Left lung (tissue), 14 donors: ENCODE measurements at regions of chr13 and their contacts with region 1.

Region 1: DNA sequence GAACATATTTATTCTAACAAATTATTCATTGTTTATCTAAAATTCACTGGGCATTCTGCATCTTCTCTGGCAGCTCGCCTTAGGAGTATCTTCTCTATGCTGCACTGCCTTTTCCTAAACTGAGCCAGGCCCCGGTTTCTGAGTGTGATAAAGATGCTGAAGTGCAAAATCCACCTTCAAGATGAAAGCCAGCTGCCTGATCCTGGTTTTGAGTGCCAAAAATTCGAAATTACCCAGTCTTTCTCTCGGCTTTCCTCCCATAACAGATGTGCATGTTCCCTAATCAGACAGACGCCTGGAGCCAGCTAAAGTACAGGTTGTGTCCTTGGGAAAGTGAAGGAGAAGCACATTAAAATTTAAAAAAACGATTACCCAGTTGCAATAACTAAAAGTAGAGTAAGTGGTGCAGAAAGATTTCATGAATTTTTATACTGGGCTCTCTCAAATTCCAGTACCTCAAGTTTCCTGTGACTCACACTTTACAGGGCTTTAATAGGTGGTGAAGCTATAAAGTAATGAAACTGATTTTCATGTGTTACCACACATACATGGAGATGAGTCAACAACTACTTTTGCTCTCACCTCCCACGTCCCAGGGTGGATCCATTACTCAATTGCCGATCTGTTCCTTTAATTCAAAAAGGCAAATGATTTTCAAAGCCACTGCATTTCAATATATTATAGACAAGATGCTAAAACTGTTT is 65.0 kb upstream of the GTF2F2 start:
- DNase-seq: no peak
- ATAC-seq: peak; percentile 72
- H3K4me3 ChIP-seq: no peak overlapping the region
- H3K27ac ChIP-seq: peak overlapping the region in 1 of 2 donors; percentile 16
- H3K4me1 ChIP-seq: peaks cover 0 to 6% of the 10 kb centered on the region in 2 donors
- H3K27me3 ChIP-seq: no peaks in the 10 kb centered on the region
- CTCF ChIP-seq: no peak

Region 2: DNA sequence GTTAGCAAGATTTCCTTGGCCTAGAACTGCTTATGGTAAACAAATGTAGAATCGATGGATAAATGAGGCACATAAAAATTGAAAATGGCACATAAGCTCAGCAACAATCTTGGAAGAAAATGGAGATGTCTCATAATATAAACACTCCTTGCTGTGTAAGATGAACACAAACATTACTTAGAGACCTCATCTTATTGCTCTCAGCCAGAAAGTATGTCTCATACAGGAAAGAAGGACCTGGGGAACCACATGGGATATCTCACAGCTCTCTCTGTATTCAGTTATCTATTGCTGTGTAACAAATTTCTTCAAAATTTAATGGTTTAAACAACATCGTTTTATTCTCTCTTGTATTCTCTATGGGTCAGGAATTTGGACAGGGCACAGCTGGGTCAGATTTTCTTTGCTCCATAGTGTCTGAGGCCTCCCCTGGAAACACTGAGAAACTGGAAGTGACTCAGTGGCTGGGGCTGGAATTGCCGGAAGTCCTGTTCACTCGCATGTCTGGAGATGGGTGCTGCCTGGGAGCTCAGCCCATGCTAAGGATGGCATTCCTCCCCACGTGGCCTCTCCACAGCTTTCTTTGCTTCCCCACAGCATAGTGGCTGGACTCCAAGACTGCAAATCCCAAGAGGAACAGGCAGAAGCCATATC is 171.1 kb before region 1 on chr13:
- intact Hi-C with region 1: no loop called
- DNase-seq: no peak
- ATAC-seq: no peak
- H3K4me3 ChIP-seq: no peak overlapping the region
- H3K27ac ChIP-seq: no peak overlapping the region
- H3K4me1 ChIP-seq: no peaks in the 10 kb centered on the region
- H3K27me3 ChIP-seq: no peaks in the 10 kb centered on the region
- CTCF ChIP-seq: no peak

Region 3: DNA sequence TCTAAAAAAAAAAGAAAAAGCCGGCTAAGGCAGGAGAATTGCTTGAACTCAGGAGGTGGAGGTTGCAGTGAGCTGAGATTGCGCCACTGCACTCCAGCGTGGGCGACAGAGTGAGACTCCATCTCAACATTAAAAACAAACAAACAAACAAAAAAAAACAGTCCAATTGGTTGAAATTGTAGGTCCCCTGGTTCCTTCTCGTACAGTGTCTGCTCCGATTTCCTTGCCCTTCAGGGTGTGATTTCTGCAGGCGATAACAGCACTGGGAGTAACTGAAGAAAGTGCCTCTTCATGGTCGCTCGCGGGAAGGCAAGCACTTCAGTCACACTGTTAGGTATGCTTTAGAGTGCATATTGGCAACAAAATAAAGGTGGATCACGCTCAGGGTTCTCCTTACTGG is 245.9 kb after region 1 on chr13:
- intact Hi-C with region 1: loop called (anchors 5 to 10 kb)
- DNase-seq: peak in 1 of 4 donors; percentile 33
- ATAC-seq: peak; percentile 93
- H3K4me3 ChIP-seq: no peak overlapping the region
- H3K27ac ChIP-seq: no peak overlapping the region
- H3K4me1 ChIP-seq: no peaks in the 10 kb centered on the region
- H3K27me3 ChIP-seq: peaks cover 0 to 11% of the 10 kb centered on the region in 2 donors
- CTCF ChIP-seq: no peak

Region 4: GRCh38 chr13:45306966-45307365 is 251.6 kb after region 1 on chr13:
- intact Hi-C with region 1: loop called (anchors 5 to 10 kb)
- DNase-seq: no peak
- ATAC-seq: no peak
- H3K4me3 ChIP-seq: no peak overlapping the region
- H3K27ac ChIP-seq: no peak overlapping the region
- H3K4me1 ChIP-seq: peaks cover 9 to 19% of the 10 kb centered on the region in 2 donors
- H3K27me3 ChIP-seq: peaks cover 0 to 13% of the 10 kb centered on the region in 2 donors
- CTCF ChIP-seq: no peak